ENCODE measurements at regions of chr1 and their contacts with region 1.

Region 1: GRCh38 chr1:248807067-248807737 is 18.5 kb downstream of the SH3BP5L start:
- DNase-seq: peak; percentile 44 to 68
- ATAC-seq: peak; percentile 68 to 79 (median 70)
- H3K4me3 ChIP-seq: no peak overlapping the region
- H3K27ac ChIP-seq: no peak overlapping the region
- H3K4me1 ChIP-seq: peaks cover 4 to 60% (median 25%) of the 10 kb centered on the region in 9 donors
- H3K27me3 ChIP-seq: peaks cover 0 to 5% (median 0%) of the 10 kb centered on the region in 7 donors
- CTCF ChIP-seq: peak; percentile 43 to 86 (median 78)

Region 2: GRCh38 chr1:248404024-248404423 is 403.2 kb before region 1 on chr1:
- intact Hi-C with region 1: loop called in 1 of 10 experiments (anchors 5 kb)
- DNase-seq: no peak
- ATAC-seq: no peak
- H3K4me3 ChIP-seq: no peak overlapping the region
- H3K27ac ChIP-seq: no peak overlapping the region
- H3K4me1 ChIP-seq: no peaks in the 10 kb centered on the region
- H3K27me3 ChIP-seq: no peaks in the 10 kb centered on the region
- CTCF ChIP-seq: no peak

Region 3: GRCh38 chr1:248622570-248623001 is 184.6 kb before region 1 on chr1:
- intact Hi-C with region 1: loop called in 8 of 10 experiments (anchors 2 to 5 kb)
- DNase-seq: no peak
- ATAC-seq: peak in 1 of 8 donors; percentile 41
- H3K4me3 ChIP-seq: no peak overlapping the region
- H3K27ac ChIP-seq: no peak overlapping the region
- H3K4me1 ChIP-seq: no peaks in the 10 kb centered on the region
- H3K27me3 ChIP-seq: peaks cover 0 to 6% (median 0%) of the 10 kb centered on the region in 7 donors
- CTCF ChIP-seq: peak in 8 of 9 donors; percentile 21 to 65 (median 42)

Measured in heart right ventricle (tissue), 16 donors.